ENCODE measurements at regions of chr11 and their contacts with region 1.

Region 1: GRCh38 chr11:61446211-61446651 is 16.3 kb downstream of the SDHAF2 start:
- DNase-seq: peak; percentile 97
- ATAC-seq: peak; percentile 97
- H3K4me3 ChIP-seq: no peak overlapping the region
- H3K27ac ChIP-seq: peak overlapping the region; percentile 71
- H3K4me1 ChIP-seq: peaks cover 8% of the 10 kb centered on the region
- H3K27me3 ChIP-seq: no peaks in the 10 kb centered on the region
- CTCF ChIP-seq: peak; percentile 97
- POLR2A ChIP-seq: no peak
- RAD21 ChIP-seq: peak; percentile 92

Region 2: GRCh38 chr11:61429691-61430582 is 16.3 kb before region 1 on chr11 and contains the starts of genes CPSF7 and SDHAF2:
- CTCF ChIA-PET with region 1: interaction called, 27 read pairs
- POLR2A ChIA-PET with region 1: interaction called, 3 read pairs
- dilution Hi-C with region 1: no loop called
- in situ Hi-C with region 1: no loop called
- intact Hi-C with region 1: no loop called
- DNase-seq: peak; percentile 92
- ATAC-seq: peak; percentile 95
- H3K4me3 ChIP-seq: peak within 1 kb of the TSS; percentile 98
- H3K27ac ChIP-seq: peak within 1 kb of the TSS; percentile 94
- H3K4me1 ChIP-seq: peaks cover 2% of the 10 kb centered on the region; the same call in 1 of the 2 replicates
- H3K27me3 ChIP-seq: no peaks in the 10 kb centered on the region
- CTCF ChIP-seq: no peak
- POLR2A ChIP-seq: peak; percentile 85
- RAD21 ChIP-seq: no peak
- total RNA-seq, gene CPSF7: 9.5 and 10.3 TPM in 2 replicates
- total RNA-seq, gene SDHAF2: 34.7 and 50.4 TPM in 2 replicates

Region 3: GRCh38 chr11:61516675-61517572 is 70.7 kb after region 1 on chr11:
- CTCF ChIA-PET with region 1: interaction called, 25 read pairs
- POLR2A ChIA-PET with region 1: no interaction called
- dilution Hi-C with region 1: no loop called
- in situ Hi-C with region 1: no loop called
- intact Hi-C with region 1: loop called (anchors 1 kb)
- DNase-seq: no peak
- ATAC-seq: peak; percentile 83
- H3K4me3 ChIP-seq: no peak overlapping the region
- H3K27ac ChIP-seq: no peak overlapping the region
- H3K4me1 ChIP-seq: no peaks in the 10 kb centered on the region
- H3K27me3 ChIP-seq: peaks cover 28% of the 10 kb centered on the region
- CTCF ChIP-seq: peak; percentile 84
- POLR2A ChIP-seq: no peak
- RAD21 ChIP-seq: peak; percentile 84

Region 4: DNA sequence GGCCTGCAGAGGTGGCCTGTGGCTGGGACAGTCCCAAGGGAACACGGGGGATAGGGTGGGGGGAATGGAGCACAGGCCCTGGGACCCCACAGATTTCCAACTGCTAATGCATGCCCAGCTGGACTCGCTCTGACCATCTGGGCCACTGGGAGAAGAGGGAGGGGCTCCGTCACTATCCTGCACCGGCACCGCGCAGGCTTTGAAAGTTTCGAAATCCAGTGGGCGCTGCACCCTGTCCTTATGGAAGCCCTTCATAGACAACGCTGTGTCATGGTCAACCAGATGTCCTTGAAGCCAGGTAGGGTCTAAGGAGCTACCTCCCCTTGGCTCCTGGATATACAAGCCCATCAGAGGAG is 92.4 kb after region 1 on chr11:
- CTCF ChIA-PET with region 1: no interaction called
- POLR2A ChIA-PET with region 1: no interaction called
- dilution Hi-C with region 1: no loop called
- in situ Hi-C with region 1: no loop called
- intact Hi-C with region 1: no loop called
- DNase-seq: no peak
- ATAC-seq: no peak
- H3K4me3 ChIP-seq: no peak overlapping the region
- H3K27ac ChIP-seq: no peak overlapping the region
- H3K4me1 ChIP-seq: peaks cover 11% of the 10 kb centered on the region
- H3K27me3 ChIP-seq: peaks cover 47% of the 10 kb centered on the region
- CTCF ChIP-seq: no peak
- POLR2A ChIP-seq: no peak
- RAD21 ChIP-seq: no peak

Region 5: GRCh38 chr11:61609980-61610366 is 163.7 kb after region 1 on chr11:
- CTCF ChIA-PET with region 1: no interaction called
- POLR2A ChIA-PET with region 1: no interaction called
- dilution Hi-C with region 1: no loop called
- in situ Hi-C with region 1: no loop called
- intact Hi-C with region 1: no loop called
- DNase-seq: no peak
- ATAC-seq: no peak
- H3K4me3 ChIP-seq: no peak overlapping the region
- H3K27ac ChIP-seq: no peak overlapping the region
- H3K4me1 ChIP-seq: peaks cover 1% of the 10 kb centered on the region
- H3K27me3 ChIP-seq: peaks cover 52% of the 10 kb centered on the region
- CTCF ChIP-seq: peak; percentile 26; the same call in 1 of the 2 replicates
- POLR2A ChIP-seq: no peak
- RAD21 ChIP-seq: peak; percentile 16; the same call in 1 of the 2 replicates

Region 6: DNA sequence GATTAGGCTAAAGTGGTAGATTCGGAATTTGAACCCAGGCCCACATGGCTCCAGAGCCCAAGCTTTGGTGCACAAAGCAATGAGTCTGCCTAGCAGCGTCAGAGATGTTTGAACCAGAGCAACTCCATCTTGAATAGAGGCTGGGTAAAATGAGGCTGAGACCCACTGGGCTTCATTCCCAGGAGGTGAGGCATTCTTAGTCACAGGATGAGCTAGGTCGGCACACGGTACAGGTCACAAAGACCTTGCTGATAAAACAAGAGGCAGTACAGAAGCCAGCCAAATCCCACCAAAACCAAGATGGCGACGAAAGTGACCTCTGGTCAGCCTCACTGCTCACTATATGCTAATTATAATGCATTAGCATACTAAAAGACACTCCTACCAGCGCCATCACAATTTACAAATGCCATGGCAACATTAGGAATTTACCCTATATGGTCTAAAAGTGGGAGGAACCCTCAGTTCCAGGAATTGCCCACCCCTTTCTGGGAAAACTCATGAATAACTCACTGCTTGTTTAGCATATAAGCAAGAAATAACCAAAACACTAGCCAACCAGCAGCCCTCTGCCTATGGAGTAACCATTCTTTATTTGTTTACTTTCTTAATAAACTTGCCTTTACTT is 193.7 kb after region 1 on chr11:
- CTCF ChIA-PET with region 1: interaction called, 21 read pairs
- POLR2A ChIA-PET with region 1: no interaction called
- dilution Hi-C with region 1: no loop called
- in situ Hi-C with region 1: loop called (anchors 5 kb)
- intact Hi-C with region 1: loop called (anchors 1 kb)
- DNase-seq: peak; percentile 31
- ATAC-seq: peak; percentile 59
- H3K4me3 ChIP-seq: no peak overlapping the region
- H3K27ac ChIP-seq: peak overlapping the region; percentile 59; the same call in 1 of the 2 replicates
- H3K4me1 ChIP-seq: peaks cover 7% of the 10 kb centered on the region; the same call in 1 of the 2 replicates
- H3K27me3 ChIP-seq: peaks cover 16% of the 10 kb centered on the region
- CTCF ChIP-seq: no peak
- POLR2A ChIP-seq: no peak
- RAD21 ChIP-seq: no peak

Measured in IMR-90 (cell line).